B cell (primary cell): ENCODE measurements at regions of chr22 and their contacts with region 1.

Region 1: DNA sequence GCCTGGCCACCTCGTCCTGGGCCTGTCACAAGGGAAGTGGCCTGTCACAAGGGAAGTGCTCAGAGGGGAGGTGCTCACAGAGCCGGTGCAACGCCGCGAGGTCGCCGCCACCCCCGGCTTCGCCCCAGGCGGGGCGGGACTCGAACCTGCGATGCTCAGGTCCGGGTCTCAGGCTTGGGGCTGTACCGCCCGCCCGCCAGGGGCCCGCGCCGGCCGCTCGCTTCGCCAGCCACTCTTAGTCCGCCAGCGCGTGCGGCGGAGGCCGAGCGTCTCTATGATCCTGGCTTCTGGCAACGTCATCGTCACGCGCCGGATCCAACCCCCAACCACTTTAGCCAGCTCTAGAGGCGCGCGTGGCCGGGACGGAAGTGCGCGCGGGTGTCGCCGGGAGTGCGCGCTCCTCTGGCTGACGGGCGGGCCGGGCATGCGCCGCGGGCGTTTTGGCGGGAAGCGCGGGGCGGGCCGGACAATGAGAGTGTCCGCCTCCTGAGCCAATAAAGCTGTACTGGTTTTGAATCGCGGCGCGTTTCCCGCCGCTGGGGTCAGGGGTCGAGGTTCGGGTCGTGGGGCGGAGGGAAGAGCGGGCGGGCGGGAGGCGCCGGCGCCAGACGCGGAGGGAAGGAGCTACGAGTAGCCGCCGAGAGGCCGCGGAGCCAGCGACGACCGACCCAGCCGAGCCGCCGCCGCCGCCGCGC is at the start of gene TRMT2A:
- DNase-seq: peak; percentile 99
- ATAC-seq: peak; percentile 84
- H3K4me3 ChIP-seq: peak within 1 kb of the TSS; percentile 42 to 94 (median 80)
- H3K4me3 Mint-ChIP-seq: peak within 1 kb of the TSS; percentile 93
- H3K27ac ChIP-seq: peak within 1 kb of the TSS; percentile 66 to 85
- H3K27ac Mint-ChIP-seq: peak within 1 kb of the TSS; percentile 94
- H3K4me1 ChIP-seq: peaks cover 19 to 40% of the 10 kb centered on the region in 2 donors
- H3K4me1 Mint-ChIP-seq: peaks cover 29% of the 10 kb centered on the region
- H3K27me3 ChIP-seq: no peaks in the 10 kb centered on the region
- H3K27me3 Mint-ChIP-seq: no peaks in the 10 kb centered on the region
- CTCF ChIP-seq: peak; percentile 30
- total RNA-seq, gene TRMT2A: 88.7 and 95.7 TPM in 2 replicates

Region 2: DNA sequence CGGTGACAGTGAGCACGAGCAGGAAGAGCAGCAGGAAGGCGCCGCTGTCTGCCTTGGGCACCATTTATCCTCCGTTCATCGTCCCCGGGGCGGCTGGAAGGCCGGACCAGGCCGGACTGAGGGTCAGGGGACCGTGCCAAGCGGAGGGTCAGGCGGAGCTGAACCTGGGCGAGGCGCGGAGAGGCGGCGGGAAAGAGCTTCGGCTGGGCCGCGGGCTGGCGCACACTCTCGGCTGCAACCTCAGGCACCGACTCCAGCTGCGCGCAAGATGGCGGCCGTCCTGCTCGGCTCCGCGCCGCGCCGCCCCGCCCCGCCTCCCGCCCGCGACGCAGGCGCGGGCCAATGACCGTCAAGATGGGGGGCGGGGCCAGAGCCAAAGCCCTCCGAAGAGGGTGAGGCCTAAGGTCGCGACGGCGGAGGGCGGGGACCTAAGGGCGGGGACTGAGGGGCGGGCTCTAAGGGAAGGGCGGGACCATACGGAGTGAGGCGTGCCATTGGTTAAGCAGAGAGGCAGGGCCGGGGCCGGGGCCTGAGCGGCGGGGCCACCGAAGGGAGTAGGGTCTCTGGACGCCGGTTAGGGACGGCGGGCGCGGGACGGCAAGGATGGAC is 994.9 kb before region 1 on chr22 and contains the start of gene DGCR2:
- CTCF ChIA-PET with region 1: no interaction called
- POLR2A ChIA-PET with region 1: no interaction called
- intact Hi-C with region 1: loop called (anchors 2 kb)
- DNase-seq: peak; percentile 97
- ATAC-seq: peak; percentile 97
- H3K4me3 ChIP-seq: peak within 1 kb of the TSS; percentile 67 to 93 (median 83)
- H3K4me3 Mint-ChIP-seq: peak within 1 kb of the TSS; percentile 94
- H3K27ac ChIP-seq: peak within 1 kb of the TSS; percentile 63 to 76
- H3K27ac Mint-ChIP-seq: peak within 1 kb of the TSS; percentile 88
- H3K4me1 ChIP-seq: peaks cover 46 to 49% of the 10 kb centered on the region in 2 donors
- H3K4me1 Mint-ChIP-seq: peaks cover 45% of the 10 kb centered on the region
- H3K27me3 ChIP-seq: no peaks in the 10 kb centered on the region
- H3K27me3 Mint-ChIP-seq: no peaks in the 10 kb centered on the region
- CTCF ChIP-seq: no peak
- total RNA-seq, gene DGCR2: 49.5 and 50.4 TPM in 2 replicates

Region 3: DNA sequence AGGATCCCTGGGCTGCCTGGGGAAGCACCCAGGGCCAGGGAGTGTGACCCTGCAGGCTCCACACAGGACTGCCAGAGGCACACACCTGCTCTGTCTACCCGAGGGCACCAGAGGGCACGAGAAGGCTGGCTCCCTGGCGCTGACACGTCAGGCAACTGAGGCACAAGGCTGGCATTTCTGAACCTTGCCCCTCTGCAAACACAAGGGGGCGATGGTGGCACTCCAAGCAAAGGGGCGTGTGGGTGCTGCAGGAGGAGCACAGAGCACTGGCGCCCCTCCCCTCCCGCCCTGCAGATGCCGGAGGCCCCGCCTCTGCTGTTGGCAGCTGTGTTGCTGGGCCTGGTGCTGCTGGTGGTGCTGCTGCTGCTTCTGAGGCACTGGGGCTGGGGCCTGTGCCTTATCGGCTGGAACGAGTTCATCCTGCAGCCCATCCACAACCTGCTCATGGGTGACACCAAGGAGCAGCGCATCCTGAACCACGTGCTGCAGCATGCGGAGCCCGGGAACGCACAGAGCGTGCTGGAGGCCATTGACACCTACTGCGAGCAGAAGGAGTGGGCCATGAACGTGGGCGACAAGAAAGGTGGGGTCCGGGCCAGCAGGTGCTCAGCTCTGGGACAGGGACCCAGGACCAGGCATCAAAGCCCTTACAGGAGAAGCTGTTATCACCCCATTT is 154.7 kb before region 1 on chr22:
- CTCF ChIA-PET with region 1: no interaction called
- POLR2A ChIA-PET with region 1: no interaction called
- intact Hi-C with region 1: no loop called
- DNase-seq: peak; percentile 32
- ATAC-seq: peak; percentile 69
- H3K4me3 ChIP-seq: no peak overlapping the region
- H3K4me3 Mint-ChIP-seq: no peak overlapping the region
- H3K27ac ChIP-seq: no peak overlapping the region
- H3K27ac Mint-ChIP-seq: no peak overlapping the region
- H3K4me1 ChIP-seq: no peaks in the 10 kb centered on the region
- H3K4me1 Mint-ChIP-seq: peaks cover 12% of the 10 kb centered on the region
- H3K27me3 ChIP-seq: no peaks in the 10 kb centered on the region
- H3K27me3 Mint-ChIP-seq: no peaks in the 10 kb centered on the region
- CTCF ChIP-seq: peak; percentile 53

Region 4: DNA sequence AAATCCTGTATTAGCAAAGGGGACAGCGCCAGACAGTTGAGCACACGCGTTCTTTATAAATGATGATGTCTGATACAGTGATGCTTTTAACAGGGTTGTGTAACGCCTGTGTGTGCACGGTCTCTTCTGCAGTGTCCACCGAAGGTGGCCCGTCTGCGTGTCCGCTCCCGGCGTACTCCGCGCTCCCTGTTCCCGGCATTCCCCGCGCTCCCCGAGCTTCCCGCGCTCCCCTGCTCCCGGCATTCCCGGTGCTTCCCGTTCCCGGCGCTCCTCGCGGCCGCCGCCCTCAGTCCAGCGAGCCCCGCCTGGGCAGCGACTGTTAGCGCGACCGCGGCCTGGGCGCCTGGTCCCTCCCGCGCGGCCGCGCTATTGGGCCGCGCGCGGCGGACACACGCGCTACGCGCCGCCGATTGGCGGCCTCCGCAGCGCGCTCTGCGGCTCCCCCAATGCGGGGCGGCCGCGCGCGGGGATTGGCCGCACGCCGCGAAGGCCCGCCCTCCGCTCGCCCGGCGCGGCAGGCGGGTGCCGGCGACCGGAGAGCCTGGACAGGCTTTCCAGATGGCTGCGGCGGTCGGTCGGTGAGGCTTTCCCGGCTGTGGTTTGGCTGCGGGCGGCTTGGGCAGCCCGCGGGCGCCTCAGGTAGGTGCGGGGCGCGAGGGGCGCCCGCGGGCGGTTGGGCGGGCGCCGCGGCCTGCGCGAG is 37.2 kb before region 1 on chr22 and contains the start of gene DGCR8:
- CTCF ChIA-PET with region 1: no interaction called
- POLR2A ChIA-PET with region 1: no interaction called
- intact Hi-C with region 1: loop called (anchors 1 kb)
- DNase-seq: peak; percentile 89
- ATAC-seq: peak; percentile 95
- H3K4me3 ChIP-seq: peak within 1 kb of the TSS; percentile 71 to 95 (median 86)
- H3K4me3 Mint-ChIP-seq: peak within 1 kb of the TSS; percentile 95
- H3K27ac ChIP-seq: peak within 1 kb of the TSS; percentile 29 to 70
- H3K27ac Mint-ChIP-seq: peak within 1 kb of the TSS; percentile 89
- H3K4me1 ChIP-seq: peaks cover 9 to 21% of the 10 kb centered on the region in 2 donors
- H3K4me1 Mint-ChIP-seq: peaks cover 37% of the 10 kb centered on the region
- H3K27me3 ChIP-seq: no peaks in the 10 kb centered on the region
- H3K27me3 Mint-ChIP-seq: no peaks in the 10 kb centered on the region
- CTCF ChIP-seq: no peak
- total RNA-seq, gene DGCR8: 43.2 and 46.6 TPM in 2 replicates

Region 5: GRCh38 chr22:20164863-20165262 is 47.8 kb after region 1 on chr22:
- CTCF ChIA-PET with region 1: no interaction called
- POLR2A ChIA-PET with region 1: no interaction called
- intact Hi-C with region 1: no loop called
- DNase-seq: no peak
- ATAC-seq: no peak
- H3K4me3 ChIP-seq: no peak overlapping the region
- H3K4me3 Mint-ChIP-seq: no peak overlapping the region
- H3K27ac ChIP-seq: no peak overlapping the region
- H3K27ac Mint-ChIP-seq: no peak overlapping the region
- H3K4me1 ChIP-seq: no peaks in the 10 kb centered on the region
- H3K4me1 Mint-ChIP-seq: no peaks in the 10 kb centered on the region
- H3K27me3 ChIP-seq: no peaks in the 10 kb centered on the region
- H3K27me3 Mint-ChIP-seq: no peaks in the 10 kb centered on the region
- CTCF ChIP-seq: no peak

Region 6: DNA sequence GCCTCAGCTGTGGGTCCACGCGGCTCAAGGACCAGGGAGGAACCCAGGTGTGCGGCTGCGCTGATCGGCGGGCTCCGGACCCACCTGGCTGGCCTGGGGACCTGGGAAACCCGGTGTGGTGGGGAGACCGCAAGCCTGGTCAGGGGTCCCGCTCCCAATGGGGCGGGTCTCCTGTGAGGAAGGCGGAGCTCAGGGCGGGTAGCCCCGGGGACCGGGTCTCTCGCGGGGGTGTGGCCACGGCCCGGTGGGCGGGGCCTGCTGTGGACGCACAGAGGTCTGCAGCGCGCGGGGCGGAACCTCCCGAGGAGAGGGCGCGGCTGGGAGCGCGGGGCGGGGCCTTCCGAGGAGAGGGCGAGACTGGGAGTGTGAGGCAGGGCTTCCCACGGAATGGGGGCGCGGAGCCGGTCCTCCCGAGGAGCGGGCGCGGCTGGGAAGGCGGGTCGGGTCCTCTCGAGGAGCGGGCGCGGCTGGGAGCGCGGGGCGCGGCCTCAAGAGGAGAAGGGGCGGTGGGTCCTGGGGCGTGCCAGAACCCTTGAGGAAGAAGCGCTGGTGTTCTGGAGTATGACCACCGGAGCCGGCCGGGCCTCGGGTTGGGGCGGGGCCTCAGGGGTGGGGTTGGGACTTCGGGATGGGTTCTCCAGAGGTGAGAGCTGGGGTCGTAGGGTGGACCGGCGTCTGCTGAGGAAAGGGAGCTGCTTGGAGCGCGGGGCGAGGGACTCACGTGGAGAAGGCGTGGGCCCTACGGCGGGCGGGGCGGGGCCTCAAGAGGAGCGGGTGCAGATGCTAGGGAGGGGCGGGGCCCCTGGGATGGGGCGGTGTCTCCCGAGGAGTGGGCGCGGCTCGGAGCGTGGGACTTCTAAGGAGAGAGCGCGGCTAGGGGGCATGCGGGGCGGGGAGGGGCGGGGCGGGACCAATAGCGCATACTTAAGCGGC is 182.0 kb after region 1 on chr22:
- CTCF ChIA-PET with region 1: no interaction called
- POLR2A ChIA-PET with region 1: no interaction called
- intact Hi-C with region 1: loop called (anchors 1 kb)
- DNase-seq: peak; percentile 89
- ATAC-seq: peak; percentile 90
- H3K4me3 ChIP-seq: peak overlapping the region in 4 of 5 experiments; percentile 28 to 75 (median 58)
- H3K4me3 Mint-ChIP-seq: peak overlapping the region; percentile 90
- H3K27ac ChIP-seq: no peak overlapping the region
- H3K27ac Mint-ChIP-seq: peak overlapping the region; percentile 70
- H3K4me1 ChIP-seq: peaks cover 4 to 10% of the 10 kb centered on the region in 2 donors
- H3K4me1 Mint-ChIP-seq: peaks cover 8% of the 10 kb centered on the region
- H3K27me3 ChIP-seq: peaks cover 0 to 7% (median 0%) of the 10 kb centered on the region in 4 experiments
- H3K27me3 Mint-ChIP-seq: peaks cover 8% of the 10 kb centered on the region
- CTCF ChIP-seq: no peak

Region 7: GRCh38 chr22:20858615-20859416 is 741.7 kb after region 1 on chr22 and contains the starts of genes PI4KA and SNAP29:
- CTCF ChIA-PET with region 1: no interaction called
- POLR2A ChIA-PET with region 1: no interaction called
- intact Hi-C with region 1: loop called (anchors 10 kb)
- DNase-seq: peak; percentile 99
- ATAC-seq: peak; percentile 92
- H3K4me3 ChIP-seq: peak within 1 kb of the TSS; percentile 80 to 94 (median 87)
- H3K4me3 Mint-ChIP-seq: peak within 1 kb of the TSS; percentile 92
- H3K27ac ChIP-seq: peak within 1 kb of the TSS; percentile 76 to 85
- H3K27ac Mint-ChIP-seq: peak within 1 kb of the TSS; percentile 94
- H3K4me1 ChIP-seq: peaks cover 18 to 30% of the 10 kb centered on the region in 2 donors
- H3K4me1 Mint-ChIP-seq: peaks cover 51% of the 10 kb centered on the region
- H3K27me3 ChIP-seq: no peaks in the 10 kb centered on the region
- H3K27me3 Mint-ChIP-seq: no peaks in the 10 kb centered on the region
- CTCF ChIP-seq: no peak
- total RNA-seq, gene PI4KA: 149 and 156 TPM in 2 replicates
- total RNA-seq, gene SNAP29: 17.4 and 18.8 TPM in 2 replicates